Right ventricle myocardium inferior (tissue), 1 donor: ENCODE measurements at regions of chr5 and their contacts with region 1.

Region 1: GRCh38 chr5:119267958-119268386 is 87.8 kb upstream of the TNFAIP8 start:
- DNase-seq: peak; percentile 98
- ATAC-seq: peak; percentile 91

Region 2: DNA sequence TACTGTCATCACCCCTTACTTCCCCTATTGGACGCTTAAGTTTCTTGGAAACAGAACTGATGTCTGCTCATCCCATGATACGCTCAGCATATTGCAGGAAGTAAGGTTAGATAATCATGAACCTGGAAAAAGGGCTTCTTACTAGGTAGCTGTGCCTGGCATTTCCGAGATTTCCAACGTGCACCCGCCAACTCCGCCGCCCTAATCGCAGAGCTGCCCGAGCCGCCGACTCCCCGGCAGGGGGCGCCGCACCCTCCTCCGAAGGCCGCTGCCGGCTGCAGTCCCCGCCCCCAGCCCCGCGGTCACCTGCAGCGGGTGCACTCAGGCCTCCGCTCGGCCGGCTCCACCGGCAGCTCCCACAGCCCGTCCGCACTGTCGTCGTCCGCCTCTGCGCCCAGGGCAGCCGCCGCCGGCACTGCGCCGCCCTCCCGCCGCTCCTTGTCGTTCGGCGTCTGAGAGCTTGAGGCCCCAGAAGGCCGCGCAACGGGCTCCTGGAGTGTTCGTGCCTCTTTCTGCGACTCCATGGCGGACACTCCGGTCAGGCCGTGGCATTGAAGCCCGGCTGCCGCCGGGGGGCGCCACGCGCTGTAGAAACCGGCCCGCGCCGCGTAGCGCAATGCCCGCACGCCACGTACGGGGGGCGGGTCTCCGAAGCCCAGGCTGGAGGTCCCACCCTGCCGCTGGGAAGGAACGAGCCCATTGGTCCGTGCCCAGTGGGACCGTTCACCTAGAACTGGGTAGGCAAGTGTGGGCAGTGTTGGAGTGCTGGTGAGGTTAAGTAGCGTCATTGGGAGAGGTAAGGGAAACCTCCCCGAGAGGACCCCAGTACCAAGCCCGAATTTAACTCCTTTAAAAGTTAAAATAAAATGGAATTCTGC is 279.7 kb before region 1 on chr5 and contains the start of gene DTWD2:
- intact Hi-C with region 1: loop called (anchors 5 kb)
- DNase-seq: peak; percentile 97
- ATAC-seq: peak; percentile 98
- total RNA-seq, gene DTWD2: 12.1 TPM

Region 3: DNA sequence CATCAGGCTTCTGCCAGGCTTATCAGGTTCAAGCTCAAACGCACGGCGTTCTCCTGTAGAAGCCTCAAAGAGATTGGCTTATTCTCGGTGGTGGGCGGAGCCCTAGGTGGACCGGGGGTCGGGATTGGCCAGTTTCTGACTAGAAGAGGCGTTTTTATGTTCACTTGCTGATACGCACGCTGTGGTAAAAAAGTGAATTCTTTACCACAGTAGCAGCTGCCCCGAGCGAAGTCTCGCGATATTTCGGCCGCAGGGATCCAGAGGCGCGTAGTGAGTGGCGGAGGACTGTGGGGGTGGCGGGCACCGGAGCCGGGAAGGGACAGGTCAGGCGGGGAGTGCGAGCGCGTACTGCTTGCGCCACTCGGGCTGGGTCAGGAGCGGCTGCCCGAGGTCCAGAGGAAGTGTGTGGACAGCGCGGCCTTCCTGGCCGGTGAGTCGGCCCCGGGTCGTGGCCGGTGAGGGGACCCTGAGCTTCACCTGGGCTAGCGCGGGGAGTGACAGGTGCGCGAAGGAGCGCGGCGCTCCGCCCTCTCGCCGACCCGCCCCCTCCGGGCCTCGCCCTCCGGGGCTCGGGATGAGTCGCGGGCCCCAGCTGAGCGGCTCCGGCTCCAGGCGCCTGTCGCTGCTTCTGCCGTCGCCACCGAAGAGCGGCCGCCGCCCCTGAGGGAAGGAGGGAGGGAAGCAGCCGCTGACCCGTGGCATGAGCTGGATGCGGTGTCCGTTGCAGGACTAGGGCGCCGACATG is 197.0 kb before region 1 on chr5 and contains the start of gene DMXL1:
- intact Hi-C with region 1: loop called (anchors 1 kb)
- DNase-seq: peak; percentile 100
- ATAC-seq: peak; percentile 98
- total RNA-seq, gene DMXL1: 22.6 TPM

Region 4: DNA sequence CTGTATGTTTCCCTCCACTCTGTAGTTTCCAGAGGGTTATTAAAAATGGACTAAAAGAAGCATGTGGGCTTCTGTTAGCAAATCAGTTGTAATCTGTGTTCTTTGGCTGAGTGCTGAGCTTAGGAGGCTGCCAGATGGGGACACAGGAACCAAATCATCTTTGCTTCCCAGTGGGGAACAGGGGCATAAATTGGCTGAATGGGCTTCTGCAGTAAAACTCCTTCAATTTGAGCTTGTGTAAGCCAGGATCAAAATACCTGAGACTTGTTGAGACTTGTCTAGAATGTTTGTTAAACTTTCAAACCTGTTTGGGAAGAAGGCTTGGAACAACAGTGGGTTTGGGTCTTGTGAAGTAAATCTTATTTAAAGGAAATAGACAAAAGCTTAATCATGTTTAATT is 55.6 kb after region 1 on chr5:
- intact Hi-C with region 1: no loop called
- DNase-seq: no peak
- ATAC-seq: peak; percentile 62

Region 5: DNA sequence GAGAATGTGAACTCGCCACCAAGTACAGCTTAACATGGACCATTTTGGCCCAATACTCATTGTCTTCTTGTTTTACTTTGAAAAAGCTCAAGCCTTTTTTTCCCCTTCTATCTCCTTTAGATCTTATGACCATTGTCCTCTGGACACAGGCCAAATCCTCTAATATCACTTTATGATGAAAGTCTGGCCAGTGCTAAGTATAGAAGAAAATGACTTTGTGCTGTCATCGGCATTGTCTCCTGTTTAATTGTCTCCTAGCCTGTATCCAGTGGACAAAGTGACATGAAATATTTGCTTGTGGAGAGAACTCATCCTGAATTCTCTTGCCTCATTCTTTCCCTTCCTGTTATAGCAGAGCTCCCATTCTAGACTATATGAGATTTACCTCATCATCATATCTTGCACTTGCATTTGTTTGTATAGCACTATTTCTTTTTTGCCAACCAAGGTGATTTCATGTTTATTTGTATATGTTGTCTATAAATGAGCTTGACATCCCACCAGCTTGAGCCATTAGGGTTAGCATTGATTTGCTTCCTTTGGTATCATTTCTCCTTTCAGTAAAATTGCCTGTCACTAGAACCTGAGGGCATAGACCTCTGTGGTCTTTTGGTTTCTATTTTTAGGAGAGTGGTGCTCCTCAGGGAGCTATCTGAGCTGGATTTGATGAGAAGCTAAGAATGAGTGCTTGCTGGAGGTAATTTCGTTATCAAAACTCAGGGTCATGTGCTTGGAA is 69.0 kb after region 1 on chr5:
- intact Hi-C with region 1: loop called (anchors 1 kb)
- DNase-seq: no peak
- ATAC-seq: no peak